Right ventricle myocardium inferior (tissue), 1 donor: ENCODE measurements at regions of chr5 and their contacts with region 1.

Region 1: GRCh38 chr5:77852514-77853352 is 76.6 kb upstream of the TBCA start:
- DNase-seq: peak; percentile 80
- ATAC-seq: peak; percentile 84

Region 2: DNA sequence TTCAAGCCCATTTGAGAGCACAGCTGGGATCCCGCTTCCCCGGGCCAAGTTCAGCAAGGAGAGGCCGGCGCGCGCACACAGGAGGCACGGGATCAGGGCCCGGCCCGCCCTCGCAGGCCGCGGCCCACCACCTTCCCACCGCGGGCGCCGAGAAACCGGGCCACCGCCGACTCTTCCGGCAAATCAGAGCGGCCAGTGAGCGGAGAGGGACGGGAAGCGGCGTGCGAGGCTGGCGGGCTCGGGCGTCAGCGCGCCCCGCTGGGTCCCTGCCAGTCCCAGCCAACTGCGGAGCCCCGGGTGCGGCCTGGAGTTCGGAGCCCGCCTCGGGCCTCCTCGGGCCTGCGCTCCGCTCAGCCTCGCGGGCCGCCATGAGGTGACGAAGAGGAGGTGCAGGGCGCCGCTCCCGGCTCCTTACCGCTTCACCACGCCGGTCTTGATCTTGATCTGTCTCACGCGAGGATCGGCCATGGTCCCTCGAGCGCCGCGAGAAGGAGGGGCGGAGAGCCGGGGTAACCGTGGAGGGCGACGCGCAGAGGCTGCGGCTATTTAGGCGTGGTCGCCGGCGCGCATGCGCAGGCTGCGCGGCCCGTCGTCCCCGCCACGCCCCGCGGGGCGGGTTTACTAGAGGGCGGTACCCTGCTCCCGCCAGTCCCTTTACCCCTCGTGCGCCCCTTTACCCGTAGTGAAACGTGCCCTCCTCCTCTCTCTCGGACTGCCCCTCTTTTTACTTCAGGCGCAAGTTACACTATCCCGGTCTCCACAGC is 76.8 kb before region 1 on chr5 and contains the start of gene TBCA:
- intact Hi-C with region 1: loop called (anchors 5 kb)
- DNase-seq: peak; percentile 95
- ATAC-seq: peak; percentile 99
- total RNA-seq, gene TBCA: 122 TPM

Region 3: DNA sequence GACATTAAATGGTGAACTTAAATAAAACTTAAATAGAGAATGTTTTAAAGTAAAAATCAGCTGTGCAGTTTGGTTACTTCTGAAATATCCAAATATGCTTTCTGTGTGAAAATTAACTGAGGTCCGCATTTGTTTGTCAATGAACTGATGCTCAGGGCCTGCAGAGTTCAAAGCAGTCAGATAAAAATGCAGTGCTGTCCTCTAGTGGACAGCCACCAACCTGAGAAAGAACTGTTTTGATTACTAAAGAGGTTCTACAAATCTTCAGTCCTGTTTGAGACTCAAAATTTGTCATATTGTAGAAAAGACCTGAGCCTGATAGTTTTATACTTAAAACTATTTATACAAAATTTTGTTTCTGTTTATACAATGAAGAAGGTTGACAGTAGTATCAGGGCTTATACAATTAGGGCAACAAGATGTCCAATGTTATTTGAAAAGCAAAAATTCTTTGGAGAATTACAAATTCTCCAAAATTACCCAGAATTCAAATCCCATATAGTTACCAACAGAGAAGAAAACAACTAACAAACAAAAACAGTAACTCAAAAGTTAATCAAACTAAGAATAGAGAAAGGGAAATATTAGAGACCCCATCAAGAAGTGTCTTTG is 155.7 kb after region 1 on chr5:
- intact Hi-C with region 1: loop called (anchors 5 kb)
- DNase-seq: no peak
- ATAC-seq: no peak